Dorsolateral prefrontal cortex (tissue), 120 donors: ENCODE measurements at regions of chr2 and their contacts with region 1.

Region 1: DNA sequence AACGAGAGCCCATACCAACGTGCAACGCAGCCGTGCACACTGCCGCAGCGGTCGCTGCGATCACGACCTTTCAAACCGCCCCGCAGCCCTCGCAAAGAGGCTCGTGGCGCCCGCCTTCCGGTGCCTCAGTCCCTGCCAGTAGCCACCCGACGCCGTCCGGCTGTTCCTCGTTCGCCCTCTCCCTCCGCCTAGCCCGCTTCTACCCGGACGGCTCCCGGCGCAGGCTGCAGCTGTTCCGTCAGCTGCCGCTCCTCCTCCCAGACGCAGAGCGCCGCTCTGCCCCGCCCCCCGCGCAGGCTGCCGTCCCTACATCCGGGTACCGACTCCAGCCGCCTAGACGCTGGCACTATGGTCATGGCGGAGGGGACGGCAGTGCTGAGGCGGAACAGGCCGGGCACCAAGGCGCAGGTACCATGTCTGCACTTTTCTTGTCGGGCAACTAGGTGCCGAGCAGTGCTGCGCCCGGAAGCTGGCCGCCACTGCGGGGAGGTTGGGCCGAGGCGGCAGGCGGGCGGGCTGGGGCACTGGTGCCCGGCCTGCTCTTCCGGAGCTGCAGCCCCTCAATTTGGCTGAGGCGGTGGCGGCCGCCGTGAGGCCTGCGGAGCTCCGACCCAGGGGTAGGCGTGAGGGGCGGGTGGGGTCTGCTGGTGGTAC is at the start of gene MOB4:
- DNase-seq: peak; percentile 84 to 96 (median 92)
- H3K4me3 ChIP-seq: peak within 1 kb of the TSS; percentile 67 to 100 (median 92)
- H3K27ac ChIP-seq: peak within 1 kb of the TSS; percentile 86 to 100 (median 98)
- H3K27me3 ChIP-seq: no peaks in the 10 kb centered on the region
- CTCF ChIP-seq: peak in 43 of 56 donors; percentile 12 to 56 (median 38)
- total RNA-seq, gene MOB4: 12.8 to 47.5 (median 26.2) TPM

Region 2: DNA sequence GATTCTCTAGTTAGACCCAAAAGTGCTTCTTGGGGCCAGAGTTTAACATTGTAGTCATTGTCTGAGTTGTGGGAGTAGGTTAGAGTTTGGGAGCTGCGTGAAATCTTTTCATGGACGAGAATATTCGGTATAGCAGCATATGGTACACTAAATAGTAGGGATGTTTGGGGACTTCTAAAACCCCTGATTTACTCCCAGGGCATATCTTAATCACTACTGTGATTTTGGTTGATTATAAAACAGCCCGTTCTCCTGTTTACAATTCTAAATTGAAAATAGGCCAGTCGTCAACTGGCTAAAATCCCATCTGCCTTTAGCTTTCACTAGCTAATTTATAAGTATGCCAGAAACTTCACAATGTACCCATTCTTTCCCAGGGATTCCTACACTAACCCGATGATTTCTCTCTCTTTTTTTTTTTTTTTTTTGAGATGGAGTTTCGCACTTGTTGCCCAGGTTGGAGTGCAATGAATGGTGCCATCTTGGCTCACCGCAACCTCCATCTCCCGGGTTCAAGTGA is 44.3 kb after region 1 on chr2:
- intact Hi-C with region 1: loop called in 1 of 2 experiments (anchors 5 kb)
- DNase-seq: no peak
- H3K4me3 ChIP-seq: peak overlapping the region in 41 of 59 donors; percentile 1 to 56 (median 32)
- H3K27ac ChIP-seq: peak overlapping the region in 58 of 59 donors; percentile 48 to 94 (median 86)
- H3K27me3 ChIP-seq: no peaks in the 10 kb centered on the region
- CTCF ChIP-seq: no peak

Region 3: GRCh38 chr2:197675711-197676188 is 159.9 kb after region 1 on chr2:
- intact Hi-C with region 1: loop called in 1 of 2 experiments (anchors 10 kb)
- DNase-seq: peak in 3 of 10 donors; percentile 11 to 48 (median 21)
- H3K4me3 ChIP-seq: peak overlapping the region; percentile 38 to 81 (median 64)
- H3K27ac ChIP-seq: peak overlapping the region; percentile 44 to 100 (median 96)
- H3K27me3 ChIP-seq: peaks cover 0 to 4% (median 0%) of the 10 kb centered on the region in 45 donors
- CTCF ChIP-seq: peak in 5 of 56 donors; percentile 3 to 17 (median 11)